ENCODE measurements at regions of chrX and their contacts with region 1.

Region 1: DNA sequence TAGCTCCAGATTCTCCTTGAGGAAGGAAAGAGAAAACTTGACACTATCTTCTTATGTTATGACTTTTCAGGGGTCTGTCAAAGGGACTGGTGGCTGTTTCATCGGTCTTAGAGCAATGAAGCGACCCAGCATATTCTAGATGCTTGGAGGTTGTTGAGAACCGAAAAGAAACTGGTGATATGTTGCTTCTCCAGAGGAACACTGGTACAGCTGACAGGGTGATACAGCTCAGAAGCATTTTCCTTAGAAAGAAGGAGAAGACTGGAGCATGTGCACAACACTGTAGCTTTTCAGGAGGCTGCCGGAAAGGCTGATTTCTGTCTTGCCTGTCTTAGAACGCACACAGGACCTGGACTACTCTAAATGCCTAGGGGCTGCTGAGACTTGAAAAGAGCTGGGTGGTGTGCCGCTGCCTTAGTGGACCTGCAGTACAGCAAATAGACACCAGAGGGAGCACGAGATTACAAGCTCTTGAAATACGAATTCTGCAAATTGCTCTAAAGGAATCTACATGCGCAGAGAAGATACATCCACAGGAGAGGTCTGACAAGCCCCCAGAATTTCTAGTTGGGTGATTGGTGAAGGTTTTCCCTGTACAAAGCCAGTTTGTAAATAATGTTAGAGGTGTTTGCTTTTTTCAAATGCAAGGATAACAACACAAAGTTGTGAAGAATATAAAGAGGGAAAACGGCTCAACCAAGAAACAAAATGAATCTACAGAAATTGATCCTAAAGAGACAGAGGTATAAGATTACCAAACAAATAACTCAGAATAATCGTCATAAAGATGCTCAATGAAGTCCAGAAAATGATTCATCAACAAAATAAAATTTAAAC is 223.1 kb upstream of the DMD start:
- DNase-seq: peak; percentile 69
- H3K4me3 Mint-ChIP-seq: no peak overlapping the region
- H3K27ac Mint-ChIP-seq: no peak overlapping the region
- H3K4me1 Mint-ChIP-seq: no peaks in the 10 kb centered on the region
- H3K27me3 Mint-ChIP-seq: no peaks in the 10 kb centered on the region
- CTCF ChIP-seq: peak; percentile 68

Region 2: GRCh38 chrX:34275699-34276098 is 841.2 kb after region 1 on chrX:
- CTCF ChIA-PET with region 1: interaction called, 17 read pairs
- intact Hi-C with region 1: loop called (anchors 2 kb)
- DNase-seq: no peak
- H3K4me3 Mint-ChIP-seq: no peak overlapping the region
- H3K27ac Mint-ChIP-seq: no peak overlapping the region
- H3K4me1 Mint-ChIP-seq: no peaks in the 10 kb centered on the region
- H3K27me3 Mint-ChIP-seq: no peaks in the 10 kb centered on the region
- CTCF ChIP-seq: no peak

Region 3: GRCh38 chrX:34300871-34301270 is 866.4 kb after region 1 on chrX:
- CTCF ChIA-PET with region 1: interaction called, 4 read pairs
- intact Hi-C with region 1: loop called (anchors 1 kb)
- DNase-seq: peak; percentile 44
- H3K4me3 Mint-ChIP-seq: no peak overlapping the region
- H3K27ac Mint-ChIP-seq: no peak overlapping the region
- H3K4me1 Mint-ChIP-seq: no peaks in the 10 kb centered on the region
- H3K27me3 Mint-ChIP-seq: no peaks in the 10 kb centered on the region
- CTCF ChIP-seq: peak; percentile 32

Region 4: GRCh38 chrX:34341258-34341657 is 906.8 kb after region 1 on chrX:
- CTCF ChIA-PET with region 1: interaction called, 15 read pairs
- intact Hi-C with region 1: no loop called
- DNase-seq: no peak
- H3K4me3 Mint-ChIP-seq: no peak overlapping the region
- H3K27ac Mint-ChIP-seq: no peak overlapping the region
- H3K4me1 Mint-ChIP-seq: peaks cover 20% of the 10 kb centered on the region
- H3K27me3 Mint-ChIP-seq: no peaks in the 10 kb centered on the region
- CTCF ChIP-seq: no peak